ENCODE measurements at regions of chrX and their contacts with region 1.

Region 1: GRCh38 chrX:25015486-25016360 is at the start of gene ARX:
- DNase-seq: peak; percentile 69
- H3K4me3 Mint-ChIP-seq: no peak within 1 kb of the TSS
- H3K27ac Mint-ChIP-seq: peak within 1 kb of the TSS; percentile 45
- H3K4me1 Mint-ChIP-seq: peaks cover 15% of the 10 kb centered on the region
- H3K27me3 Mint-ChIP-seq: peaks cover 64% of the 10 kb centered on the region
- total RNA-seq, gene ARX: not detected in 2 replicates

Region 2: DNA sequence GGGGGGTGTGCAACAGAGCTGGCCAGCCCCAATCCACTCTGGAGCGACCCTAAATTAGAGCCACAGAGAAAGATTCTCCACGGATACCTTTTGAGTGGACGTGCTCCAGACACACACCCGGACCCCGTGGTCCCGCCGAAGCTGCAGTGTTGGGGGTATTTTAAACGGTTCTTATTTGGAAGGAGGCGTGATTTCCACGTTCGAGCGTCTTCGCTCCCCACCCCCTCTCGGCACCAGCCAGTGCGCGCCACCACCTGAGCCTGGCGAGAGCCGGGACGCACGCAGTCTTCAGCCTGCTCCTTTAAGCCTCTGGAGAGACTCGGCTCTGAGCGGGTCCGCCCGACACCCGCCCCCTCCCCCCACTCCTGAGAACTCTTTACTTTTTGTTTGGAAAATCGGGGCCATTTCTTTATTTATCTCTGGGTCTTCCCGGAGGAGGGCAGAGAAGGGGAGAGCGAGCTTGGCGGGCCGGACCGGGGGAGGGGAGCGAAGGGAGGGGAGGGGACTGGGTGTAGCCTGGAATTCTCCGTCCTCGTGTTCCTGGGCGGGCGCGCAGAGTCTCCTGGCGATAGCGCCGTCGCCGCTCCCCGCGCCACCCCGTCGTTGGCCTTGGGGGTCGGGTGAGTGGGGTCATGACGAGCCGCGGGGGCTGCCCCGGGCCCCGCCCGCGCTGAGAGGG is 1681.7 kb before region 1 on chrX:
- intact Hi-C with region 1: loop called (anchors 10 kb)
- DNase-seq: no peak
- H3K4me3 Mint-ChIP-seq: no peak overlapping the region
- H3K27ac Mint-ChIP-seq: no peak overlapping the region
- H3K4me1 Mint-ChIP-seq: peaks cover 2% of the 10 kb centered on the region
- H3K27me3 Mint-ChIP-seq: peaks cover 52% of the 10 kb centered on the region

Region 3: DNA sequence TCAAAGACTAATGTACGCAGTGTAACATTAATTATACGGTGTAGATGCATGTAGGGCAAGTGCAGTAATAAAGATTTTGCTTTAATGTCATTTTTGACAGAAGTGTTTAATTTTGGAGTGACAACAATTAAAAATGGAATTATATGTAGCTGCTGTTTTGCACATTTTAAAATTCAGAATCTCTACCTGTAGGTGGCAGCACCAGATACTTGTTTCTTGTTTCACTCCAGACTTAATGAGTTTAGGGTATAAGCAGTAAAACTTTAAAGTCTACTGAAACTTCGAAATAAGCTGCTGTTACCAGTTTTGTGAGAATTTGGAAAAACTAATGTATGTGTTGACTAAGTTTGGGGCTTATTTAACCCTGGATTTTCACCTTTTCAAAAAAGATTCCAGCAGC is 177.1 kb before region 1 on chrX:
- intact Hi-C with region 1: loop called (anchors 5 kb)
- DNase-seq: peak; percentile 65
- H3K4me3 Mint-ChIP-seq: no peak overlapping the region
- H3K27ac Mint-ChIP-seq: no peak overlapping the region
- H3K4me1 Mint-ChIP-seq: no peaks in the 10 kb centered on the region
- H3K27me3 Mint-ChIP-seq: no peaks in the 10 kb centered on the region

Region 4: GRCh38 chrX:25049357-25049756 is 33.6 kb after region 1 on chrX:
- intact Hi-C with region 1: no loop called
- DNase-seq: no peak
- H3K4me3 Mint-ChIP-seq: no peak overlapping the region
- H3K27ac Mint-ChIP-seq: no peak overlapping the region
- H3K4me1 Mint-ChIP-seq: peaks cover 3% of the 10 kb centered on the region
- H3K27me3 Mint-ChIP-seq: peaks cover 4% of the 10 kb centered on the region